Activated naive CD4-positive, alpha-beta T cell treated with anti-CD3 and anti-CD28 coated beads for 36 hours (primary cell): ENCODE measurements at regions of chr4 and their contacts with region 1.

Region 1: GRCh38 chr4:40908702-40909362 is 159.1 kb downstream of the NSUN7 start:
- DNase-seq: peak; percentile 89
- H3K4me3 Mint-ChIP-seq: peak overlapping the region; percentile 22
- H3K27ac Mint-ChIP-seq: peak overlapping the region; percentile 90
- H3K4me1 Mint-ChIP-seq: peaks cover 41% of the 10 kb centered on the region
- H3K27me3 Mint-ChIP-seq: no peaks in the 10 kb centered on the region

Region 2: GRCh38 chr4:40432504-40432903 is 476.3 kb before region 1 on chr4:
- CTCF ChIA-PET with region 1: no interaction called
- intact Hi-C with region 1: loop called (anchors 2 kb)
- DNase-seq: no peak
- H3K4me3 Mint-ChIP-seq: no peak overlapping the region
- H3K27ac Mint-ChIP-seq: peak overlapping the region; percentile 61
- H3K4me1 Mint-ChIP-seq: peaks cover 40% of the 10 kb centered on the region
- H3K27me3 Mint-ChIP-seq: no peaks in the 10 kb centered on the region

Region 3: GRCh38 chr4:40672536-40673526 is 236.0 kb before region 1 on chr4:
- CTCF ChIA-PET with region 1: no interaction called
- intact Hi-C with region 1: loop called (anchors 1 kb)
- DNase-seq: peak; percentile 67
- H3K4me3 Mint-ChIP-seq: peak overlapping the region; percentile 32
- H3K27ac Mint-ChIP-seq: peak overlapping the region; percentile 86
- H3K4me1 Mint-ChIP-seq: peaks cover 37% of the 10 kb centered on the region
- H3K27me3 Mint-ChIP-seq: no peaks in the 10 kb centered on the region

Region 4: DNA sequence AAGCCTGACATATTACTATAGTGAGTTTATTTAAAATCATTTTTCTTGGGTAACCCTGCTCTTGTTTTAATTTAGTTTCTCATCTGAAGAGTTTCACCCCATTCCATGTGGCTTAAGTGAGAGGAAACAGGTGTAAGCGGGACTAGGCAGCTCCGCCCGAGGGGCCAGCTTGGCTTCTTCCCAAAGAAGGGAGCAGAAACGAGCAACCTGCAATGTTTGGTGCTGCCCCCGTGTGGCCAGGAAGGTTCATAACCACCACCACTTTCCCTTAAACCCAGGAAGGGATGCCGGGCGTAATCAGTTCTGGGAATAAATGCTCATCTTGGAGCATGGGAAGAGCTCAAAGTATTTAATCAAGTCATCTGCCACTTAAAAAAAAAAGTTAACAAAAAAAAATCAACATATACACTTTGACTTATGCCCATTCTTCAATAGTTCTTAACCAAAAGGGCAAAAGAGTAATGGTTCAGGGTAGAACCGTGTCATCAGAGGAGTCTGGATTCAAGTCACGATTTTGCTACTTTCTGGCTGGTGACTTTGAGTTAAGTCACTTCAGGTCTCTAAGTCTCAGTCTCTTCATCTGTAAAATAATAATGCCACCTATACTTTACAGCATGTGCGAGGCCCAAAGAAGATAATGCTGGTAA is 11.2 kb before region 1 on chr4:
- CTCF ChIA-PET with region 1: interaction called, 37 read pairs
- intact Hi-C with region 1: no loop called
- DNase-seq: peak; percentile 79
- H3K4me3 Mint-ChIP-seq: peak overlapping the region; percentile 62
- H3K27ac Mint-ChIP-seq: peak overlapping the region; percentile 59
- H3K4me1 Mint-ChIP-seq: peaks cover 4% of the 10 kb centered on the region
- H3K27me3 Mint-ChIP-seq: no peaks in the 10 kb centered on the region

Region 5: DNA sequence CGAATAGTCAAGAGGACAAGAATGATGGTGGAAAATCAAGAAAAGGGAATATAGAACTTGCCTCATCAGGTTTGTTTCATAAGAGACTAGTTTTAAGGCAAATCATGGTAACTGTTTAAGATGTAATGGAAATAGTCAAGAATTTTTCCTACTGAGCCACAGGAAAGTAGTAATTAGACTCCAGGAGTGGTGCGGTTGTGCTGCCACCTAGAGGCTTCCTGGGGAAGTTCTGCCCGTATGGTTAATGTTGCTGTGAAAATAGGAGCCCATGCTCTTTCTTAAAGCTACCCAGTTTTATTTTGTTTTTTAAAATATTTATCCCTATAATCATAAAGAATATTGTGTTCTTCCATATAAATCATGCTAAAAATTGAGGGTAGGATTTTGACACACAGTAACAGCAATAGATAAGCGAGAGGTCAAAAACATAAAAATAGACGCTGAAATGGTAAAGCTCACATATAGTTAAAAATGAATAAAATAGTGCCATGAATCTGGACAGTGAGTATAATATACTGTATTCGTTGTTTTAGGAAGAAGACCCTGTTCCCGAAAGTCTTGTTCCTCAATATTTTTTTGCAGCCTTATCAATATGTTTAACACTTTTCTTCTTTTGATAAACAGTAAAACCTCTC is 752.7 kb after region 1 on chr4:
- CTCF ChIA-PET with region 1: no interaction called
- intact Hi-C with region 1: loop called (anchors 5 kb)
- DNase-seq: peak; percentile 66
- H3K4me3 Mint-ChIP-seq: no peak overlapping the region
- H3K27ac Mint-ChIP-seq: no peak overlapping the region
- H3K4me1 Mint-ChIP-seq: peaks cover 4% of the 10 kb centered on the region
- H3K27me3 Mint-ChIP-seq: peaks cover 2% of the 10 kb centered on the region